GM10248 (cell line): ENCODE measurements at regions of chr2 and their contacts with region 1.

Region 1: DNA sequence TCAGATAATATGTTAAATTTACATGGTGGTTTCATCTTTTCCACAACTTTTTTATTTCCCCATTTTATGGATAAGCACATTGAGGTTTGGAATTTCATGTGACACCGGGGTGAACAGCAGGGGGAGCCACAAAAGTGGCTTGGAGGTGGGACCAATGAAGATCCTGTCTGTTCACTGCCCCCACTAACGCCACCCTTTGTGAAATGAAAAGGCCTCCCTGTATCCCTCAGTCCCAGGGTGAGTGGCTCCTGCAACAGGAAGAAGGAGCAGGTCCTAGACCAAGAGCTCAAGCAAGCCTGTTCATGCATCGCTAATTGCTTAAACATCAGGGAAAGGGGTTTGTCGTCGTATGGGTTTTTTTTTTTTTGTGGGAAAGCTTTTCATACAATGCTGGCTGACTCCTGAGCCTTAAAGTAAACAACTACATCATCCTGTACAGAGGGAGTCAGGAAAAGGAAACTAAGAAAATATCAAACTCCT is 267.8 kb upstream of the EPAS1 start:
- DNase-seq: no peak
- CTCF ChIP-seq: peak; percentile 10

Region 2: DNA sequence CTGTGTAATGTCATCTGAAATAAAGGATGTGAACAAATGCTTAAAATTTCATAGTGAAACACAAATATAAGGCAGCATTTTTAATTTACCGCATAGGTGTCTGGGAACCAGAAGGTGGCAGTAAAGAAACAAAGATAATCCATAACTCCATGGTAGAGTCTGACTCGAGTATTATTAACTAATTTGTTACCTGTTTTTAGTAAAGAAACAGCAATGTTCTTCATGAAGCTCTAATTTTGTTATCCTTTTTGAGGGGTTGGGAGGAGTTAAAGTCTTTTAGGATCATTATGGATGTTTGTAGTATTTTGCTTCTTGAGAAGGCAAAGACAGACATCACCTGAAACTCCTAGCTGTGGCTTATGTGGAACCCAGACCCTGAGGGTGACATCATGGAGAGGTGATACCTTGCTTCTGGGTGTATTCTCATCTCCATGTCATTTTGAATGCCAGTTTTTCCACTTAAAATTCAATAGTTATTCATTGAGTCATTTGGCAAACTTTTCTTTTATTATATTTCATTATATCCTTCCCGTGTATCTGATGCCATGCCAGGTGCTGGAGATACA is 18.4 kb before region 1 on chr2:
- CTCF ChIA-PET with region 1: interaction called, 15 read pairs
- POLR2A ChIA-PET with region 1: no interaction called
- DNase-seq: peak; percentile 59
- CTCF ChIP-seq: peak; percentile 56

Region 3: GRCh38 chr2:46134531-46135181 is 105.3 kb after region 1 on chr2:
- CTCF ChIA-PET with region 1: no interaction called
- POLR2A ChIA-PET with region 1: no interaction called
- DNase-seq: no peak
- CTCF ChIP-seq: no peak

Region 4: GRCh38 chr2:46461011-46461674 is 431.8 kb after region 1 on chr2:
- CTCF ChIA-PET with region 1: interaction called, 12 read pairs
- POLR2A ChIA-PET with region 1: no interaction called
- DNase-seq: peak; percentile 71
- CTCF ChIP-seq: peak; percentile 97